Naive thymus-derived CD4-positive, alpha-beta T cell (primary cell): ENCODE measurements at regions of chr5 and their contacts with region 1.

Region 1: GRCh38 chr5:100777680-100778281 is 125.3 kb downstream of the ST8SIA4 start:
- DNase-seq: no peak
- ATAC-seq: peak; percentile 67
- H3K4me3 ChIP-seq: no peak overlapping the region
- H3K4me3 Mint-ChIP-seq: peak overlapping the region in 6 of 10 donors; percentile 1 to 66 (median 20)
- H3K27ac ChIP-seq: no peak overlapping the region
- H3K27ac Mint-ChIP-seq: peak overlapping the region in 4 of 9 donors; percentile 8 to 70 (median 20)
- H3K4me1 ChIP-seq: peaks cover 3 to 13% of the 10 kb centered on the region in 2 donors
- H3K4me1 Mint-ChIP-seq: peaks cover 24 to 42% (median 35%) of the 10 kb centered on the region in 7 donors
- H3K27me3 ChIP-seq: no peaks in the 10 kb centered on the region
- H3K27me3 Mint-ChIP-seq: no peaks in the 10 kb centered on the region

Region 2: GRCh38 chr5:99900302-99900852 is 877.4 kb before region 1 on chr5:
- CTCF ChIA-PET with region 1: no interaction called
- POLR2A ChIA-PET with region 1: no interaction called
- intact Hi-C with region 1: no loop called
- DNase-seq: no peak
- ATAC-seq: no peak
- H3K4me3 ChIP-seq: no peak overlapping the region
- H3K4me3 Mint-ChIP-seq: no peak overlapping the region
- H3K27ac ChIP-seq: no peak overlapping the region
- H3K27ac Mint-ChIP-seq: no peak overlapping the region
- H3K4me1 ChIP-seq: no peaks in the 10 kb centered on the region
- H3K4me1 Mint-ChIP-seq: no peaks in the 10 kb centered on the region
- H3K27me3 ChIP-seq: no peaks in the 10 kb centered on the region
- H3K27me3 Mint-ChIP-seq: no peaks in the 10 kb centered on the region

Region 3: DNA sequence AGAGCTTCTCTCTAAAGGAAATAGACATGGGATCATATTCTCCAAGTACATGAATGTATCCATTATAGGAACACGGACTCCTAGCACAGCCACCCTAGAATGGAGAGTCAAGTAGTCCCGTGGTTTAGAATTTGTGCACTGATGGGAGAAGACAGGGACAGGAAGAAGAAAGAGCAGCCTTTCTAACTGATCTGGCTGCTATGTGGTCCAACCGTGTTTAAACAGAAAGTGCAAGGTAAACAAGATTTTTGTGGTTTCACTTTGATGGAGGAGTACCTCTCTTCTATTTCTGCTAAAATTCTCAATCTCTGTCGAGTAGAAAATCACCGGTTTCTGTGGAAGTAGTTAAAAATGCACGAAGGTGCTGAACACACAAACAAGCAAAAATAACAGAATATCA is 46.0 kb before region 1 on chr5:
- CTCF ChIA-PET with region 1: no interaction called
- POLR2A ChIA-PET with region 1: no interaction called
- intact Hi-C with region 1: loop called (anchors 2 kb)
- DNase-seq: peak in 7 of 9 donors; percentile 14 to 55 (median 45)
- ATAC-seq: peak; percentile 87
- H3K4me3 ChIP-seq: peak overlapping the region; percentile 7
- H3K4me3 Mint-ChIP-seq: peak overlapping the region in 9 of 10 donors; percentile 1 to 85 (median 80)
- H3K27ac ChIP-seq: no peak overlapping the region
- H3K27ac Mint-ChIP-seq: peak overlapping the region; percentile 28 to 83 (median 65)
- H3K4me1 ChIP-seq: peaks cover 0 to 11% of the 10 kb centered on the region in 2 donors
- H3K4me1 Mint-ChIP-seq: peaks cover 4 to 14% (median 9%) of the 10 kb centered on the region in 7 donors
- H3K27me3 ChIP-seq: no peaks in the 10 kb centered on the region
- H3K27me3 Mint-ChIP-seq: no peaks in the 10 kb centered on the region

Region 4: GRCh38 chr5:100840384-100840783 is 62.6 kb after region 1 on chr5:
- CTCF ChIA-PET with region 1: no interaction called
- POLR2A ChIA-PET with region 1: interaction called, 3 read pairs
- intact Hi-C with region 1: loop called in 1 of 2 experiments (anchors 2 kb)
- DNase-seq: peak in 1 of 9 donors; percentile 29
- ATAC-seq: peak; percentile 83
- H3K4me3 ChIP-seq: no peak overlapping the region
- H3K4me3 Mint-ChIP-seq: peak overlapping the region in 3 of 10 donors; percentile 8 to 69 (median 47)
- H3K27ac ChIP-seq: no peak overlapping the region
- H3K27ac Mint-ChIP-seq: peak overlapping the region in 4 of 9 donors; percentile 0 to 90 (median 54)
- H3K4me1 ChIP-seq: peaks cover 6 to 14% of the 10 kb centered on the region in 2 donors
- H3K4me1 Mint-ChIP-seq: peaks cover 21 to 67% (median 63%) of the 10 kb centered on the region in 7 donors
- H3K27me3 ChIP-seq: no peaks in the 10 kb centered on the region
- H3K27me3 Mint-ChIP-seq: no peaks in the 10 kb centered on the region

Region 5: DNA sequence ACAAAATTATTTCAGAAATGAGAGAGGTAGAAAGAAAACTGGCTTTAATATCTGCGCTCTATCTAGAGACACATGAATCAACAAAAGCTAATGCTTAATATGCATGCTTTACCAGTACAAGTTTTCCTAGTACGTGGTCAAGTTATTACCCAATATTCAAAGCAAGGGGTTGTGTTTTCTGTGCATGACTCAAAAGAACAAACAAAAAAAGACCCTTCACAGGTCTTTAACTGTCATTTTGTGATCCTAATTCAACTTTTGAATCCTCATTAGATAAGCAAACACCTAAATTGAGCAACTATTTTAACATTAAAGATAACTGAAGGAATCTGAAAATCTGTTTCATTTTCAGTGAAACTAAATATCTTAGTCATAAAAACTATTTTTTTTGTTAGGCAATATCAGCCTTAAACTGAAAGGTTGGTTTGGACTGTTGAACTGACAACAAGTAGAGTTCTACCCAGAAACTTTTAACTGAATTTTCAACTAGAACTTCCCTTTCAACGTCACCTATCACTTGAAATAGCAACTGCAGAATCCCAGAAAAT is 112.8 kb after region 1 on chr5:
- CTCF ChIA-PET with region 1: interaction called, 3 read pairs
- POLR2A ChIA-PET with region 1: interaction called, 3 read pairs
- intact Hi-C with region 1: loop called in 1 of 2 experiments (anchors 2 kb)
- DNase-seq: no peak
- ATAC-seq: peak; percentile 47
- H3K4me3 ChIP-seq: peak overlapping the region; percentile 10
- H3K4me3 Mint-ChIP-seq: peak overlapping the region in 9 of 10 donors; percentile 6 to 81 (median 69)
- H3K27ac ChIP-seq: no peak overlapping the region
- H3K27ac Mint-ChIP-seq: peak overlapping the region; percentile 39 to 92 (median 72)
- H3K4me1 ChIP-seq: peaks cover 26 to 34% of the 10 kb centered on the region in 2 donors
- H3K4me1 Mint-ChIP-seq: peaks cover 27 to 83% (median 71%) of the 10 kb centered on the region in 7 donors
- H3K27me3 ChIP-seq: no peaks in the 10 kb centered on the region
- H3K27me3 Mint-ChIP-seq: no peaks in the 10 kb centered on the region